ENCODE measurements at regions of chr17 and their contacts with region 1.

Region 1: GRCh38 chr17:65588176-65588808 is 26.8 kb upstream of the AXIN2 start:
- DNase-seq: peak; percentile 49
- ATAC-seq: no peak; the same call in 1 of the 2 replicates
- H3K4me3 ChIP-seq: no peak overlapping the region
- H3K27ac ChIP-seq: no peak overlapping the region
- H3K4me1 ChIP-seq: peaks cover 19% of the 10 kb centered on the region
- H3K27me3 ChIP-seq: no peaks in the 10 kb centered on the region
- CTCF ChIP-seq: peak; percentile 45; the same call in 1 of the 2 replicates

Region 2: GRCh38 chr17:65953316-65954311 is 365.3 kb after region 1 on chr17:
- CTCF ChIA-PET with region 1: interaction called, 13 read pairs
- POLR2A ChIA-PET with region 1: no interaction called
- intact Hi-C with region 1: no loop called
- DNase-seq: no peak
- ATAC-seq: no peak
- H3K4me3 ChIP-seq: no peak overlapping the region
- H3K27ac ChIP-seq: no peak overlapping the region
- H3K4me1 ChIP-seq: no peaks in the 10 kb centered on the region
- H3K27me3 ChIP-seq: no peaks in the 10 kb centered on the region
- CTCF ChIP-seq: no peak